Heart left ventricle (tissue), 16 donors: ENCODE measurements at regions of chr5 and their contacts with region 1.

Region 1: GRCh38 chr5:142922223-142922952 is 152.2 kb downstream of the ARHGAP26 start:
- DNase-seq: no peak
- ATAC-seq: peak in 2 of 4 donors; percentile 44 to 53
- H3K4me3 ChIP-seq: no peak overlapping the region
- H3K27ac ChIP-seq: peak overlapping the region in 8 of 12 donors; percentile 21 to 63 (median 44)
- H3K4me1 ChIP-seq: peaks cover 4 to 57% (median 43%) of the 10 kb centered on the region in 12 donors
- H3K27me3 ChIP-seq: no peaks in the 10 kb centered on the region
- CTCF ChIP-seq: peak; percentile 27 to 72 (median 52)
- POLR2A ChIP-seq: no peak

Region 2: DNA sequence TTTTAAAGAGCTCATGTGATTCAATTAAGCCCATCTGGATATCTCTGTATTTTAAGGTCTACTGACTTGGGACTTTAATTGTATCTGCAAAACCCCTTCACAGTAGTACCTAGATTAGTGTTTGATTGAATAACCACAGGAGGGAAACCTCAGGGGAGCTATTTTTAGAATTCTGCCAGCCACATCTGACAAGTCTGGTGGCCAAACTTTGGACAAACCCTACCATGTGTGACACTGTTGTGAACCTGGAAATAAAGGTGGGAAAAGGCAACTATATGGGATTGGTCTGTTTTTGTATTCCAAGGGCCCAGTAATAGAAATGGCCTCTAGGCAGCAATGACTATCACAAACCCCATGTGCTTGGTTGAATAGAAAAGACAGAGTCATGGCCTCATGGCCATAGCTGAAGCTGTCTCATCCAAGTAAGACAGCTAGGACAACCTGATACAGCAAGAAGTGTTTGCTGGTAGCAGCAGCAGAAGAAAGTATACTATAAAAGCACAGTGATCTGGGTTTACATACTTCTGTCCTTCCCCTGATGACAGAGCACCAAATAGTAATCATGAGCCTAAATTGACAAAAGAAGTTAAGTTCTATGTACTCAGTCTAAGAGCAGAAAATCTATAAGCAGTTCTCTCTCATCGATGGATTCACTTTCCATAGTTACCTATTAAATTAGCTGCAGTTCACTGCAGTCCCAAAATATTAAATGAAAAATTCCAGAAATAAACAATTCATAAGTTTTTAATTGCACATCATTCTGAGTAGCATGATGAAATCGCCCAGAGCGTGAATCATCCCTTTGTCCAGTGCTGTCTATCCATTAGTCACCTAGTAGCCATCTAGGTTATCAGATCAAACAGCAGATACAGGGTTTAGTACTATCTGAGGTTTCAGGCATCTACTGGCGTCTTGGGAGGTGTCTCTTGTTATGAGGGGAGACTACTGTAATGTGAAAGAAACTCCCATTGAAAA is 37.6 kb after region 1 on chr5:
- intact Hi-C with region 1: loop called in 6 of 10 experiments (anchors 2 to 5 kb)
- DNase-seq: no peak
- ATAC-seq: peak in 1 of 4 donors; percentile 5
- H3K4me3 ChIP-seq: no peak overlapping the region
- H3K27ac ChIP-seq: peak overlapping the region in 1 of 12 donors; percentile 27
- H3K4me1 ChIP-seq: peaks cover 0 to 63% (median 35%) of the 10 kb centered on the region in 12 donors
- H3K27me3 ChIP-seq: no peaks in the 10 kb centered on the region
- CTCF ChIP-seq: no peak
- POLR2A ChIP-seq: no peak

Region 3: DNA sequence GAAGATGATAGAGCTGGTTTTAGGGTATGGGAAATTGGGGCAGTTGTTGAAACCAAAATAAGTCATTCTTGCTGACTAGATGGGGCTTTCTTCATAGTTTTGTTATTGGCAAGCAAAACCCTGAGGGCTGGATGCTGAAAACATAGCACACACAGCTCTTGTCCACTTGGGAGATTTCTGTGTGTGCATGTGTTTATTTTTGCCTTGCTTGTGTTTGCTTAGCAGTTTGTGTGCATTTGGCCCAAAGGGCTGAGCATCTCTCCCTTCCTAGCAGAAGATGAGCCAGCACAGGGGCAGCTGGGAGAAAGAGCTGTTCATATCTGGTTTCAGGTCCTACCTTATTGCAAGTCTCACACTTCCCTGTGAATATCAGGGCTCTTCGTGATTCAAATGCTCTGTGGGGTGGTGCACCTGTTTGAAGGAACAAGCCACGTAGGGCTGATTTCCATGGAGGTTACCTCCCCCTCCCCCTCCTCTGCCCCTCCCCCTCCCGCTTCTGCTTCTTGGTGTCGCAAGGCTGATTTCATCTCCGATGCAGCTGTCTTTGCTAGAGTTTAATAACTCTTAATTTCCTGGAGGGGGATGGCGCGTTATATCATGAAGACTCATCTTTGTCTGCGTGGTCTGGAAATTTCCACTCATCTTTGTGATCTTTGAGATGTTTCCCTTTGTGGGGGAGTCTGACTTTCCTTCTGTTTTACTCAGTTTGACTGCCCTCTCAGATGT is 144.3 kb after region 1 on chr5:
- intact Hi-C with region 1: loop called in 1 of 10 experiments (anchors 10 kb)
- DNase-seq: peak in 2 of 5 donors; percentile 43
- ATAC-seq: peak in 1 of 4 donors; percentile 23
- H3K4me3 ChIP-seq: no peak overlapping the region
- H3K27ac ChIP-seq: peak overlapping the region in 8 of 12 donors; percentile 1 to 81 (median 34)
- H3K4me1 ChIP-seq: peaks cover 5 to 60% (median 51%) of the 10 kb centered on the region in 12 donors
- H3K27me3 ChIP-seq: no peaks in the 10 kb centered on the region
- CTCF ChIP-seq: no peak
- POLR2A ChIP-seq: no peak

Region 4: DNA sequence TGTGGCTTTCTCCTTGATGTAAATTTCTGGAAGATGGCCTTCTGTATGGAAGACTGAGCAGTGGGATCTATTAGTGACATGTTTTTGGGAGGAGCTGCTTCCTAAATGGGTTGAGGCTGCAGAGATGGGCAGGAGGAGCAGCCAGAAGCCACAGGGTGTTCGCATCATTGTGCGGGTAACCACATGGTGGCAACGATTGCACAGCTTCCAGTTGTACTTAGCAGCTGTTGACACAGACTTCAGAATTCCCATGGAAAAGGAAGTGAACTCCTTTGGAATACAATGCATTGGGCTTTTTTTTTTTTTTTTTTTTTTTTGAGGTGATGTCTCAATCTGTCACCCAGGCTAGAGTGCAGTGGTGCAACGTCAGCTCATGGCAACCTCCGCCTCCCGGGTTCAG is 183.8 kb after region 1 on chr5:
- intact Hi-C with region 1: loop called in 1 of 10 experiments (anchors 10 kb)
- DNase-seq: peak in 4 of 5 donors; percentile 38 to 56 (median 50)
- ATAC-seq: peak; percentile 53 to 86 (median 68)
- H3K4me3 ChIP-seq: no peak overlapping the region
- H3K27ac ChIP-seq: no peak overlapping the region
- H3K4me1 ChIP-seq: peaks cover 0 to 66% (median 43%) of the 10 kb centered on the region in 12 donors
- H3K27me3 ChIP-seq: no peaks in the 10 kb centered on the region
- CTCF ChIP-seq: peak in 10 of 12 donors; percentile 8 to 55 (median 36)
- POLR2A ChIP-seq: no peak

Region 5: DNA sequence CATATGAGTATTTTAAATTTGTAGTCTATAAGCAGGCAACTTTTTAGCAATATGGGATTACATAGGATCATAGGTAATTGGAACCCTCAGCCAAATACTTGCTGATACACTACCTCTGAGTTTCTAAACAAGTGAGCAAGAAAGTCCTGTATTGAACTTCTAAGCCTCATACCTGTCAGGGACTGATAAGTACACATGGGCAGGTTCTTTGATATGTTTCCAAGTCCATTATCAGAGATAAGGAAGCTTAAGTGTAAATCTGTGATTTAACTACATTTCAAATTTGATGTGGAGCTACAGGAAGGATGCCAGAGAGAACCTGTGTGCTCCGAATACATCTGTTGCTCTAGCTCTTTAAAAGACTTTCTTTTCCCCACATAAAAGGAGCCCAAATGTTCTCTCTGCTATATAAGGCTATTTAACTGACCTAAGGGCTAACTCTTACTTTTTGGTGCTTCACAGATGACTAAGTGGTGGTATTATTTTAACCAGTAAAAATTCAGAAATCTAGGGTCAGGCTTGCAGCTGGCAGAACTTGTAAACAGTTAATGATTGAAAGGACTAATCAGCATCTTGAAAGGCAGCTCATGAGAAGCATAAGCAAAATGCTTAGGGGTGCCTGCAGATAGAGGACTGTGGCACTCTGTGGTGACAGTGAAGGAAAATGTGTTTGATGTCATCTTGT is 252.5 kb after region 1 on chr5:
- intact Hi-C with region 1: no loop called
- DNase-seq: no peak
- ATAC-seq: no peak
- H3K4me3 ChIP-seq: no peak overlapping the region
- H3K27ac ChIP-seq: no peak overlapping the region
- H3K4me1 ChIP-seq: peaks cover 0 to 55% (median 14%) of the 10 kb centered on the region in 12 donors
- H3K27me3 ChIP-seq: no peaks in the 10 kb centered on the region
- CTCF ChIP-seq: no peak
- POLR2A ChIP-seq: no peak

Region 6: DNA sequence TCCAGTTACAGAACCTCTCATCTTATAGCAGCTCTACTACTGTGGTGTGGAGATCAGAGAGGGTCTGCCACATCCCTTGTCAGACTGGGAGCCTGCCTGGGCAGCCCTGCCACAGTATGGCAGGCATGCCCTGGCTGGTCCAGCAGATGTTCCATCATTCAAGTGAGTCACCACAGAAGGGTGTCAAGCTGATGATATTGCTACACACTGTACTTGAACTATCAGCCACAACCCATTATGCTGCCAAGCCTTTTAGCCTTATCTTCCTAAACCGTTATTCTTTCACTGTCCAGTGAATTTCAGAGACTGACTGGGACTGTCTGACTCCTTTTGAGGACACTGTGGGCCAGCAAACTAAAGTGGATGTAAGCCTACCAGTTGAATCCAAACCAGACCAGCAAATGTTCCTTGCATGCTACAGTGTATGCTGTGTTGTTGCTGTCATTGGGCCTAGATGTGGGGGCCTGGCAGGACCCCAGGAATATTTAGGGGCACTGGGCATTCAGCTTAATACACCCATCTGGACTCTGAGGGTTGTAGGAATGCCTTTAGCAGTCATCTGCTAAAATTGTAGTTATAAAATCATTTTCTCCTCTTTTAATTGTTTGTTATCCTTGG is 278.5 kb after region 1 on chr5:
- intact Hi-C with region 1: loop called in 1 of 10 experiments (anchors 5 kb)
- DNase-seq: peak in 4 of 5 donors; percentile 56 to 73 (median 68)
- ATAC-seq: peak; percentile 96 to 99 (median 98)
- H3K4me3 ChIP-seq: no peak overlapping the region
- H3K27ac ChIP-seq: peak overlapping the region in 7 of 12 donors; percentile 19 to 58 (median 45)
- H3K4me1 ChIP-seq: peaks cover 0 to 61% (median 33%) of the 10 kb centered on the region in 12 donors
- H3K27me3 ChIP-seq: no peaks in the 10 kb centered on the region
- CTCF ChIP-seq: no peak
- POLR2A ChIP-seq: no peak

Region 7: GRCh38 chr5:144142139-144142823 is 1219.9 kb after region 1 on chr5:
- intact Hi-C with region 1: loop called in 2 of 10 experiments (anchors 10 kb)
- DNase-seq: no peak
- ATAC-seq: peak; percentile 51 to 77 (median 62)
- H3K4me3 ChIP-seq: no peak overlapping the region
- H3K27ac ChIP-seq: no peak overlapping the region
- H3K4me1 ChIP-seq: peaks cover 0 to 34% (median 11%) of the 10 kb centered on the region in 12 donors
- H3K27me3 ChIP-seq: no peaks in the 10 kb centered on the region
- CTCF ChIP-seq: peak; percentile 36 to 78 (median 64)
- POLR2A ChIP-seq: no peak